ENCODE measurements at regions of chr21 and their contacts with region 1.

Region 1: GRCh38 chr21:26769613-26770188 is 75.5 kb downstream of the ADAMTS1 start:
- DNase-seq: peak in 2 of 4 donors; percentile 39 to 57
- ATAC-seq: peak; percentile 64
- H3K4me3 ChIP-seq: no peak overlapping the region
- H3K27ac ChIP-seq: no peak overlapping the region
- H3K4me1 ChIP-seq: no peaks in the 10 kb centered on the region
- H3K27me3 ChIP-seq: no peaks in the 10 kb centered on the region
- CTCF ChIP-seq: peak; percentile 23 to 54

Region 2: DNA sequence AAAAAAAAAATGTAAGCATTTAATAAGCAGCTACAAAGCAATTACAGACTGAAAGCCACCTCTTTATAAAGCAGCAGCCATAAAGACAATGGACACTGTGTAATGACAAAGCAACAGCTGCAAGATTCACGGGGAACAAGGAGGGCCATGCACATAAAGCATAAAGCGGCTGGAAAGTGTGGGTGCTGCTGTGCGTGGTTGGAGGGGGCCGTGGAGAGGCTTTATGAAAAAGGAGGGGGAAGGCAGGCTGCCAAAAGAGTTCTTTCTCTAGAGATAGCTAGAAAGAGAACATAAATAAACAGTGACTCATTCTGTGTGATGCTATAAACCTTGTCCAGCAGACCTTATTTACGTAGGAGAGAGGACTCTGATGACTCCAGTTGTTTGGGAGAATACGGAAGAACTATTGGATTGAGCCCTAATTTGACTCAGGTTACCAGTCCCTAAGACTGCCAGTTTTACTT is 26.2 kb after region 1 on chr21:
- intact Hi-C with region 1: no loop called
- DNase-seq: peak in 2 of 4 donors; percentile 39 to 63
- ATAC-seq: peak; percentile 31
- H3K4me3 ChIP-seq: no peak overlapping the region
- H3K27ac ChIP-seq: peak overlapping the region in 1 of 2 donors; percentile 39
- H3K4me1 ChIP-seq: peaks cover 4 to 6% of the 10 kb centered on the region in 2 donors
- H3K27me3 ChIP-seq: no peaks in the 10 kb centered on the region
- CTCF ChIP-seq: no peak

Region 3: GRCh38 chr21:26834181-26834945 is 64.7 kb after region 1 on chr21:
- intact Hi-C with region 1: loop called in 1 of 2 experiments (anchors 10 kb)
- DNase-seq: no peak
- ATAC-seq: no peak
- H3K4me3 ChIP-seq: no peak overlapping the region
- H3K27ac ChIP-seq: no peak overlapping the region
- H3K4me1 ChIP-seq: no peaks in the 10 kb centered on the region
- H3K27me3 ChIP-seq: no peaks in the 10 kb centered on the region
- CTCF ChIP-seq: no peak

Measured in left lung (tissue), 14 donors.